ENCODE measurements at regions of chr16 and their contacts with region 1.

Region 1: GRCh38 chr16:66608241-66609138 is 4.0 kb downstream of the CMTM3 start:
- DNase-seq: peak; percentile 44 to 93
- H3K4me3 ChIP-seq: no peak overlapping the region
- H3K27ac ChIP-seq: peak overlapping the region in 1 of 2 donors; percentile 49
- H3K4me1 ChIP-seq: peaks cover 0 to 18% of the 10 kb centered on the region in 2 donors
- H3K27me3 ChIP-seq: no peaks in the 10 kb centered on the region
- CTCF ChIP-seq: peak; percentile 87 to 96 (median 94)

Region 2: GRCh38 chr16:66483689-66484481 is 124.6 kb before region 1 on chr16:
- intact Hi-C with region 1: loop called (anchors 5 kb)
- DNase-seq: peak in 1 of 2 donors; percentile 82
- H3K4me3 ChIP-seq: no peak overlapping the region
- H3K27ac ChIP-seq: no peak overlapping the region
- H3K4me1 ChIP-seq: peaks cover 8 to 20% of the 10 kb centered on the region in 2 donors
- H3K27me3 ChIP-seq: no peaks in the 10 kb centered on the region
- CTCF ChIP-seq: peak; percentile 72 to 91 (median 88)

Region 3: DNA sequence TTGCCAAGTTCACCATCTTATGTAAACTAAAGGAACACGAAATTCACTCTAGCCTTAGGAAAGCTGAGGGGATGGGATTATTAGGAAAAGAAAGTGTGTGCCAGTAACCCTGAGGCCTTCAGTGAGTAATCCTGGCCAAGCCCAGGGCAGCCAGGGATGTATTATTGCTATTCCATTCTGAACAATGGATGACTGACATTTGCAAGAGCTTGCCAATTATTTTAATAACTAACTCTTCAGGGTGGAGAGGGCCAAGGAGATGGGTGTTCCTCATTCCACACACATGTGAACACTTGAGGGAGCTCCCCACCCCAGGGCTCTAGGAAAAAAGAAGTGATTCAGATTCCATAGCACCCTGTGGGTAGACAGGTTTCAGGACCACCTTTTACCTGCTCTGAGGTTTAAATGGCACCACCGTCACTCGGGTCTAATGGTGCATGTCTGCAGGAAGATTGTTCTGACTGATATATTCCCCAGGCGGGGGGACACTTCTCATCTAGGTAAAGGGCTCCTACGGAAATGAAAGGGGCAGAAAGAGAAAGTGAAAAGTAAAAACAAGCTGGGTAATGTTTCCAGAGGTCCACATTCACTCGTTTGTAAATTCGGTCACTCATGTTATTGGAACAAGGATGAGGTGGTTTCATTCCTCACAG is 100.1 kb before region 1 on chr16:
- intact Hi-C with region 1: no loop called
- DNase-seq: peak in 1 of 2 donors; percentile 70
- H3K4me3 ChIP-seq: no peak overlapping the region
- H3K27ac ChIP-seq: peak overlapping the region; percentile 11 to 99
- H3K4me1 ChIP-seq: peaks cover 23 to 60% of the 10 kb centered on the region in 2 donors
- H3K27me3 ChIP-seq: no peaks in the 10 kb centered on the region
- CTCF ChIP-seq: no peak

Region 4: DNA sequence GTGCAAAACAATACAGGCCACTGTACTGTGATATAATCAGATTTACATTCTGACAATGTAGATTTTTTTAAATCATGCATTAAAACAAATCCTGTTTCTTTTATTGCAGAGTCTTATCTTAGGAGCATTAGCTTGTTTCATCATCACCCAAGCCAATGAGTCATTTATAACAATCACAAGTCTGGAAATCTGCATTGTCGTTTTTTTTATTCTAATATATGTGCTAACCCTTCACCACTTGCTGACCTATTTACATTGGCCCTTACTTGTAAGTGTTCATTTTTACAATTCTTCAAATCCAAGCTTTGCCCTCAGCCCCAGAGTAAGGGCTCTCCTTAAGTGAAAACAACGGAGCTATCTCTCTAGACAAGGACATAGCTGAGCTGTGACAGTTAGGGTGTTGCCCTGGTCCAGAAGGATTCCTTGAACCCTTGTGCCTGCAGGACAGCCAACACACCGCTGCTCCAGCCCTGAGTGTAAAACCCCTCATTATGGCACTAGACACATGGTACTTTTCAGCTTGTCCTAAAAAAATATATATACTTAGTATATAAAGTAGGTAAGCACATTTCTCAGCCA is 38.6 kb before region 1 on chr16:
- intact Hi-C with region 1: no loop called
- DNase-seq: no peak
- H3K4me3 ChIP-seq: no peak overlapping the region
- H3K27ac ChIP-seq: no peak overlapping the region
- H3K4me1 ChIP-seq: no peaks in the 10 kb centered on the region
- H3K27me3 ChIP-seq: no peaks in the 10 kb centered on the region
- CTCF ChIP-seq: no peak

Region 5: GRCh38 chr16:66650707-66651473 is 42.4 kb after region 1 on chr16:
- intact Hi-C with region 1: loop called (anchors 1 kb)
- DNase-seq: peak in 1 of 2 donors; percentile 88
- H3K4me3 ChIP-seq: peak overlapping the region; percentile 12 to 49
- H3K27ac ChIP-seq: no peak overlapping the region
- H3K4me1 ChIP-seq: no peaks in the 10 kb centered on the region
- H3K27me3 ChIP-seq: no peaks in the 10 kb centered on the region
- CTCF ChIP-seq: peak; percentile 78 to 96 (median 96)

Region 6: DNA sequence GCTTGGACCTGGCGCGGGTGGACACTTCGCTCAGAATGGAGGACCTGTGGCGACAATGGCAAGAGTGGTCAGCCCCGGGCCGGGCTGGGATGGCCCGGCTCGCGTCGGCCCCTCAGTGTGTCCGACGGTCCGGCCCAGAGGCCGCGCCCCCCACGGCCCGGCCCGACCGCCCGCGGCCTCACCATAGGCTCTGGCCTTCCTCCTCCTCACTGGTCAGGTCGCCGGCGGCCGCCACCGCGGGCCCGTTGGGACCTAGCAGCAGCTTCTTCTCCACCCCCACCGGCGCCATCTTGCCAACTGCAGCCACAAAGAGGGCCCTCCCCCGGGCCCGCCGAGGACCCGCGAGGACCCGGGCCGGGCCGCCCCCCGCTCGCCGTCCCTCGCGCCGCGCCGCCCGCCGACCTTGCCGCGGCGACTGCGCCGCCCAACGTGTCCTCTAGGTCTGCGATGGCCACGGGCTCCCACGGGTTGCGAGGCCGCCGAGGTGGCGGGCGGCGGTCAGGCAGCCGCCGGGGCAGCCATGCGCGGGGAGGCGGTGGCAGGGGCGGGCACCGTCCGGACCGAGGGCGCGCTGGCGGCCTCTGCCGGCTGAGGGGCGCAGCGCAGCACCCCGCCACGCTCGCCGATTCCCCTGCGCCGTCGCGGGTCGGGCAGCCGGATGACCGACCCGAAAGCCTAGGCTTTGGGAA is 143.0 kb after region 1 on chr16 and contains the start of gene DYNC1LI2:
- intact Hi-C with region 1: loop called (anchors 5 kb)
- DNase-seq: peak in 1 of 2 donors; percentile 88
- H3K4me3 ChIP-seq: peak within 1 kb of the TSS; percentile 82 to 87
- H3K27ac ChIP-seq: peak within 1 kb of the TSS; percentile 82 to 83
- H3K4me1 ChIP-seq: peaks cover 6 to 22% of the 10 kb centered on the region in 2 donors
- H3K27me3 ChIP-seq: no peaks in the 10 kb centered on the region
- CTCF ChIP-seq: peak; percentile 62 to 97 (median 65)
- total RNA-seq, gene DYNC1LI2: 99.7 TPM

Measured in ascending aorta (tissue), 2 donors.